Mammary epithelial cell (primary cell): ENCODE measurements at regions of chr3 and their contacts with region 1.

Region 1: GRCh38 chr3:45507820-45508317 is 86.7 kb upstream of the LIMD1 start:
- DNase-seq: no peak
- H3K4me3 ChIP-seq: no peak overlapping the region
- H3K27ac ChIP-seq: no peak overlapping the region
- H3K4me1 ChIP-seq: peaks cover 10% of the 10 kb centered on the region
- H3K27me3 ChIP-seq: no peaks in the 10 kb centered on the region
- CTCF ChIP-seq: no peak

Region 2: DNA sequence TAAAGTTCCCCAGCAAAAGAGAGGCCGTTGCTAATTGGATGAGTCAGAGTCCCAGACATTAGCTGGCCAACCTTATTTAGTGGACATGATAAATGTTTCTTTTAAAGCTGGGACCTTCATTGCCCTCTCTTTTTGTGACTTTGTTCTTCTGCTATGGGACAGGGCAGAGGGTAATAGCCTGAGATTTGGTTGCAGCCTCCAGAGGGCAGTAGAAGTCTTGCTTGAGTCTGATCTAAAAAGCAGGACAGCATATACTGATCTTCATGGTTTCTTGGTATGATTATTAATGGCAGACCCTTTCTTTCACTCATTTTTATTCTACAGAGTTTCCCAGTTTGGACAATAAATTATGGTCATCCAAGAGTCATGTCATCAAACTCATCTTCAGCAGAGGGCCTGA is 977.9 kb before region 1 on chr3:
- CTCF ChIA-PET with region 1: no interaction called
- dilution Hi-C with region 1: no loop called
- in situ Hi-C with region 1: no loop called
- intact Hi-C with region 1: loop called (anchors 10 kb)
- DNase-seq: no peak
- H3K4me3 ChIP-seq: no peak overlapping the region
- H3K27ac ChIP-seq: no peak overlapping the region
- H3K4me1 ChIP-seq: no peaks in the 10 kb centered on the region
- H3K27me3 ChIP-seq: no peaks in the 10 kb centered on the region
- CTCF ChIP-seq: peak; percentile 33 to 36

Region 3: DNA sequence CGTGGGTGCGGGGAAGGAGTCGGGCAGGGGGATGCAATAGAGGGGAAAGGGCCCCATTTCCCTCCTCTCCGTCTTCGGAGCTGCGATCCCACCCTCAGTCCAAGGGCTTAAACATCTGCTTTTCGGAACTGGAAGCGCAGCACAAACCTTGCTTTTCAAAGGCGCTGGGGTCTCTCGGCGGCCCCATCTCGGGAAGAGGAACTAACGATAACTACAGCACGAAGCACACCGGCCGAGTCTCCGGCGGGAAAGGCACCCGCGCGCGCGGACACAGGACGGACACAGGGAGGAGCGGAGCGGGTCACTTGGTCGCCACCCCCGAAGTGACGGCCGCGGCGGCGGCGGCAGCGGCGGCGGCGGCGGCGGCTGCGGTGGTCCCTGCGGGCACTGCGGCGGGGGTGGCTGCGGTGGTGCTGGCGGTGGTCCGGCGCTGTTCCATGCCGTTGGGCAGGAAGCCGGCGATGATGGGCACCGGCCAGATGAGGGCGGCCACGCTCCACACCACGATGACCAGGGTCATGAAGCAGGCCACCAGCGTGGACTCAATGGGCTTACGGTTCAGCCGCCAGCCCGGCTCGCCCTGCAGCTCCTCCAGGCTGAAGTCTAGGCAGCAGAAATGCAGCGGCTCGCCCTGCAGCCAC is 282.9 kb before region 1 on chr3:
- CTCF ChIA-PET with region 1: no interaction called
- dilution Hi-C with region 1: no loop called
- in situ Hi-C with region 1: loop called in 1 of 2 experiments (anchors 5 kb)
- intact Hi-C with region 1: no loop called
- DNase-seq: peak; percentile 55
- H3K4me3 ChIP-seq: peak overlapping the region; percentile 37 to 69 (median 58)
- H3K27ac ChIP-seq: no peak overlapping the region
- H3K4me1 ChIP-seq: peaks cover 12% of the 10 kb centered on the region
- H3K27me3 ChIP-seq: no peaks in the 10 kb centered on the region
- CTCF ChIP-seq: peak; percentile 36 to 61

Region 4: GRCh38 chr3:45760878-45761711 is 253.2 kb after region 1 on chr3:
- CTCF ChIA-PET with region 1: no interaction called
- dilution Hi-C with region 1: no loop called
- in situ Hi-C with region 1: no loop called
- intact Hi-C with region 1: loop called (anchors 1 kb)
- DNase-seq: peak; percentile 26
- H3K4me3 ChIP-seq: no peak overlapping the region
- H3K27ac ChIP-seq: no peak overlapping the region
- H3K4me1 ChIP-seq: no peaks in the 10 kb centered on the region
- H3K27me3 ChIP-seq: no peaks in the 10 kb centered on the region
- CTCF ChIP-seq: peak; percentile 81 to 90

Region 5: DNA sequence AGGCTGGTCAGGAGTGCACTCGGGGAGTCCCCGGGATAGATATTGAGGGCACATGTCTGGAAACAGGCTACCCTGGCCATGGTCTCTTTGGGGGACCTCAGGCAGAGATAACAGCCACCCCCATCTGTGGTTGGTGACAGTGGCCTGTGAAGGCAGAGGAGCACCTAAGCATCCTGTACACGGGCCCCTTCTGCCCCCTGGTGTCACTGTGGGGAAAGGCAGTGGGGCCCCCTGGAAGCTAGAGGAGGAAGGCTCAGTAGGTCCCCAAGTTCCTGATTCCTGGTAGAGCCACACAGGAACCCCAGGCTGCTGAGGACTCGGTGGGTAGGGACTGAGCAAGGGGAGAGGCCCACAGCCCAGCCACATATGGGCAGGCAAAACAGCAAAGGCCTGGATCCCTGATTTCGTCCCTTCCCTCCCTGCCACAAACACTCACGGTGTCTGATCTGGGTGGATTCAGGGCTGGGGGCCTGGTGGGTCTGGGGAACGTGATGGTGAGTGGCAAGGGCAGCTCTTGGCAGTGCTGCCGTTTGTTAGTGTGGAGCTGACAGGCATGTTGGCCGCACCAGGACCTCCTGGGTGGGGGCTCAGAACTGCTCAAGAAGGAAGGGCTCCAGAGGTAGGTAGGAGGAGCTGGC is 421.3 kb after region 1 on chr3:
- CTCF ChIA-PET with region 1: no interaction called
- dilution Hi-C with region 1: no loop called
- in situ Hi-C with region 1: no loop called
- intact Hi-C with region 1: loop called (anchors 5 kb)
- DNase-seq: no peak
- H3K4me3 ChIP-seq: no peak overlapping the region
- H3K27ac ChIP-seq: no peak overlapping the region
- H3K4me1 ChIP-seq: peaks cover 1% of the 10 kb centered on the region
- H3K27me3 ChIP-seq: no peaks in the 10 kb centered on the region
- CTCF ChIP-seq: peak; percentile 76 to 87